ENCODE measurements at regions of chr14 and their contacts with region 1.

Region 1: GRCh38 chr14:22556990-22557623 is 31.9 kb downstream of the DAD1 start:
- DNase-seq: peak; percentile 79 to 98 (median 93)
- ATAC-seq: peak; percentile 17
- H3K4me3 ChIP-seq: peak overlapping the region; percentile 46 to 60
- H3K4me3 Mint-ChIP-seq: peak overlapping the region; percentile 81
- H3K27ac ChIP-seq: peak overlapping the region; percentile 86 to 97
- H3K27ac Mint-ChIP-seq: peak overlapping the region; percentile 98
- H3K4me1 ChIP-seq: peaks cover 86% of the 10 kb centered on the region
- H3K4me1 Mint-ChIP-seq: peaks cover 91% of the 10 kb centered on the region
- H3K27me3 ChIP-seq: no peaks in the 10 kb centered on the region
- H3K27me3 Mint-ChIP-seq: no peaks in the 10 kb centered on the region
- CTCF ChIP-seq: peak; percentile 100

Region 2: GRCh38 chr14:21917699-21918436 is 639.2 kb before region 1 on chr14:
- CTCF ChIA-PET with region 1: interaction called, 22 read pairs
- POLR2A ChIA-PET with region 1: interaction called, 7 read pairs
- intact Hi-C with region 1: loop called (anchors 1 to 2 kb)
- DNase-seq: peak in 8 of 9 experiments; percentile 38 to 83 (median 65)
- ATAC-seq: peak; percentile 55
- H3K4me3 ChIP-seq: peak overlapping the region; percentile 14 to 16
- H3K4me3 Mint-ChIP-seq: peak overlapping the region; percentile 83
- H3K27ac ChIP-seq: no peak overlapping the region
- H3K27ac Mint-ChIP-seq: peak overlapping the region; percentile 91
- H3K4me1 ChIP-seq: peaks cover 36% of the 10 kb centered on the region
- H3K4me1 Mint-ChIP-seq: peaks cover 51% of the 10 kb centered on the region
- H3K27me3 ChIP-seq: no peaks in the 10 kb centered on the region
- H3K27me3 Mint-ChIP-seq: no peaks in the 10 kb centered on the region
- CTCF ChIP-seq: peak; percentile 79

Region 3: GRCh38 chr14:22039938-22040775 is 517.0 kb before region 1 on chr14:
- CTCF ChIA-PET with region 1: no interaction called
- POLR2A ChIA-PET with region 1: no interaction called
- intact Hi-C with region 1: loop called in 1 of 2 experiments (anchors 5 kb)
- DNase-seq: peak in 8 of 9 experiments; percentile 1 to 72 (median 52)
- ATAC-seq: peak; percentile 95
- H3K4me3 ChIP-seq: peak overlapping the region; percentile 9 to 35
- H3K4me3 Mint-ChIP-seq: peak overlapping the region; percentile 79
- H3K27ac ChIP-seq: no peak overlapping the region
- H3K27ac Mint-ChIP-seq: peak overlapping the region; percentile 87
- H3K4me1 ChIP-seq: peaks cover 4% of the 10 kb centered on the region
- H3K4me1 Mint-ChIP-seq: peaks cover 16% of the 10 kb centered on the region
- H3K27me3 ChIP-seq: no peaks in the 10 kb centered on the region
- H3K27me3 Mint-ChIP-seq: no peaks in the 10 kb centered on the region
- CTCF ChIP-seq: peak; percentile 72

Region 4: GRCh38 chr14:22314181-22314820 is 242.8 kb before region 1 on chr14:
- CTCF ChIA-PET with region 1: no interaction called
- POLR2A ChIA-PET with region 1: no interaction called
- intact Hi-C with region 1: loop called in 1 of 2 experiments (anchors 10 kb)
- DNase-seq: peak in 3 of 9 experiments; percentile 3 to 55 (median 36)
- ATAC-seq: peak; percentile 54
- H3K4me3 ChIP-seq: no peak overlapping the region
- H3K4me3 Mint-ChIP-seq: peak overlapping the region; percentile 42
- H3K27ac ChIP-seq: no peak overlapping the region
- H3K27ac Mint-ChIP-seq: peak overlapping the region; percentile 22
- H3K4me1 ChIP-seq: no peaks in the 10 kb centered on the region
- H3K4me1 Mint-ChIP-seq: no peaks in the 10 kb centered on the region
- H3K27me3 ChIP-seq: no peaks in the 10 kb centered on the region
- H3K27me3 Mint-ChIP-seq: no peaks in the 10 kb centered on the region
- CTCF ChIP-seq: no peak

Region 5: DNA sequence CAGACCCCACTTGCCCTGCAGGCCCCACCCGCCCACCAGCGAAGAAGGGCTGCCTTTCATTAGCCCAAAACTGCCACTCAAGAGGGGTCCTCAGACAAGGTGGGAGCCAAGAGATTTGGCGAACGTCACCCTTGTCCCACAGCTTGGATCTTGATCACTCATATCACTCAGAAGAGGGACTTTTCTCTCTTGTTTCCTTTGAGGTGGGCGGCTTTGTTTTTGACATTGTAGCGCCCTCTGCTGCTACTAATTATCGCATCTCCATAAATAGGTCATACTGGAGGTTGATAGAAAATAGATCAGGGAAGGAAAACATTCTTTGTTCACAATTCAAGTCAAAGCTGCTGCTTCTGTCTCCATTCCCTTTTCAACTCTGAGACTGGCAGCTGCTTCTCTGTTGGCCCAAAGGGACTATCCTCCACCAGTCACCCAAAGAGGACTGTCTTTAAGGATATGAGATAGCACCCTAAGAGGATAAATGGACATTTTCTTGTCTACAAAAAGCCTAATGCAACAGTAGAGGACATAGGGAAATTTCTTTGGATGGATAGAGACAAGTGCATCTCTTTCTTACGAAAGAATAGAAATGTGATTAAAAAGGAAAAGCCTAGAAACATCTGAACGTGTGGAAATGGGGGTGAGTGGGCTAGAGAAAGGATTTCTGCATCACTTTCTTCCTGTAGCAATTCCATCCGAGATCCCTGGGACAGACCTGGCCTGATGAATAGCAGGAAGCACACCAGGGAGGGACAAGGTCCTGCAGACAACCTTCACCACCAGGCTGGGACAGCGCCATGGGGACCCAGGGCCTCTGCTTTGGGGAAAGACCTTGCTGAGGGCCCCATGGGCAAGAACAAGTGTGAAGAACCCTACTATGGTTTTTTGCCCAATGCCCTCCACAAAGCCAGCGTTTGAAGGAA is 83.9 kb before region 1 on chr14:
- CTCF ChIA-PET with region 1: no interaction called
- POLR2A ChIA-PET with region 1: no interaction called
- intact Hi-C with region 1: no loop called
- DNase-seq: peak in 2 of 9 experiments; percentile 49 to 61
- ATAC-seq: no peak
- H3K4me3 ChIP-seq: no peak overlapping the region
- H3K4me3 Mint-ChIP-seq: no peak overlapping the region
- H3K27ac ChIP-seq: peak overlapping the region in 1 of 2 experiments; percentile 25
- H3K27ac Mint-ChIP-seq: no peak overlapping the region
- H3K4me1 ChIP-seq: no peaks in the 10 kb centered on the region
- H3K4me1 Mint-ChIP-seq: no peaks in the 10 kb centered on the region
- H3K27me3 ChIP-seq: no peaks in the 10 kb centered on the region
- H3K27me3 Mint-ChIP-seq: no peaks in the 10 kb centered on the region
- CTCF ChIP-seq: no peak

Region 6: GRCh38 chr14:22531451-22532344 is 25.4 kb before region 1 on chr14:
- CTCF ChIA-PET with region 1: interaction called, 225 read pairs
- POLR2A ChIA-PET with region 1: interaction called, 348 read pairs
- intact Hi-C with region 1: no loop called
- DNase-seq: peak in 2 of 9 experiments; percentile 44 to 70
- ATAC-seq: peak; percentile 62
- H3K4me3 ChIP-seq: peak overlapping the region; percentile 38 to 43
- H3K4me3 Mint-ChIP-seq: peak overlapping the region; percentile 81
- H3K27ac ChIP-seq: peak overlapping the region; percentile 54 to 83
- H3K27ac Mint-ChIP-seq: peak overlapping the region; percentile 97
- H3K4me1 ChIP-seq: peaks cover 94% of the 10 kb centered on the region
- H3K4me1 Mint-ChIP-seq: peaks cover 90% of the 10 kb centered on the region
- H3K27me3 ChIP-seq: no peaks in the 10 kb centered on the region
- H3K27me3 Mint-ChIP-seq: no peaks in the 10 kb centered on the region
- CTCF ChIP-seq: no peak

Region 7: GRCh38 chr14:22766456-22767322 is 209.6 kb after region 1 on chr14 and contains the start of gene OXA1L:
- CTCF ChIA-PET with region 1: interaction called, 5 read pairs
- POLR2A ChIA-PET with region 1: interaction called, 7 read pairs
- intact Hi-C with region 1: loop called in 1 of 2 experiments (anchors 1 kb)
- DNase-seq: peak; percentile 88 to 99 (median 97)
- ATAC-seq: peak; percentile 92
- H3K4me3 ChIP-seq: peak within 1 kb of the TSS; percentile 93 to 99
- H3K4me3 Mint-ChIP-seq: peak within 1 kb of the TSS; percentile 94
- H3K27ac ChIP-seq: peak within 1 kb of the TSS; percentile 84 to 93
- H3K27ac Mint-ChIP-seq: peak within 1 kb of the TSS; percentile 96
- H3K4me1 ChIP-seq: peaks cover 22% of the 10 kb centered on the region
- H3K4me1 Mint-ChIP-seq: peaks cover 34% of the 10 kb centered on the region
- H3K27me3 ChIP-seq: no peaks in the 10 kb centered on the region
- H3K27me3 Mint-ChIP-seq: no peaks in the 10 kb centered on the region
- CTCF ChIP-seq: no peak
- total RNA-seq, gene OXA1L: 186 to 192 TPM

Region 8: GRCh38 chr14:23301288-23301968 is 744.3 kb after region 1 on chr14:
- CTCF ChIA-PET with region 1: no interaction called
- POLR2A ChIA-PET with region 1: no interaction called
- intact Hi-C with region 1: loop called in 1 of 2 experiments (anchors 10 kb)
- DNase-seq: peak; percentile 93 to 99 (median 97)
- ATAC-seq: peak; percentile 74
- H3K4me3 ChIP-seq: peak overlapping the region; percentile 77 to 97
- H3K4me3 Mint-ChIP-seq: peak overlapping the region; percentile 97
- H3K27ac ChIP-seq: peak overlapping the region; percentile 97
- H3K27ac Mint-ChIP-seq: peak overlapping the region; percentile 98
- H3K4me1 ChIP-seq: peaks cover 19% of the 10 kb centered on the region
- H3K4me1 Mint-ChIP-seq: peaks cover 27% of the 10 kb centered on the region
- H3K27me3 ChIP-seq: no peaks in the 10 kb centered on the region
- H3K27me3 Mint-ChIP-seq: peaks cover 14% of the 10 kb centered on the region
- CTCF ChIP-seq: peak; percentile 68

Measured in CD8-positive, alpha-beta T cell (primary cell).